ENCODE measurements at regions of chr14 and their contacts with region 1.

Region 1: DNA sequence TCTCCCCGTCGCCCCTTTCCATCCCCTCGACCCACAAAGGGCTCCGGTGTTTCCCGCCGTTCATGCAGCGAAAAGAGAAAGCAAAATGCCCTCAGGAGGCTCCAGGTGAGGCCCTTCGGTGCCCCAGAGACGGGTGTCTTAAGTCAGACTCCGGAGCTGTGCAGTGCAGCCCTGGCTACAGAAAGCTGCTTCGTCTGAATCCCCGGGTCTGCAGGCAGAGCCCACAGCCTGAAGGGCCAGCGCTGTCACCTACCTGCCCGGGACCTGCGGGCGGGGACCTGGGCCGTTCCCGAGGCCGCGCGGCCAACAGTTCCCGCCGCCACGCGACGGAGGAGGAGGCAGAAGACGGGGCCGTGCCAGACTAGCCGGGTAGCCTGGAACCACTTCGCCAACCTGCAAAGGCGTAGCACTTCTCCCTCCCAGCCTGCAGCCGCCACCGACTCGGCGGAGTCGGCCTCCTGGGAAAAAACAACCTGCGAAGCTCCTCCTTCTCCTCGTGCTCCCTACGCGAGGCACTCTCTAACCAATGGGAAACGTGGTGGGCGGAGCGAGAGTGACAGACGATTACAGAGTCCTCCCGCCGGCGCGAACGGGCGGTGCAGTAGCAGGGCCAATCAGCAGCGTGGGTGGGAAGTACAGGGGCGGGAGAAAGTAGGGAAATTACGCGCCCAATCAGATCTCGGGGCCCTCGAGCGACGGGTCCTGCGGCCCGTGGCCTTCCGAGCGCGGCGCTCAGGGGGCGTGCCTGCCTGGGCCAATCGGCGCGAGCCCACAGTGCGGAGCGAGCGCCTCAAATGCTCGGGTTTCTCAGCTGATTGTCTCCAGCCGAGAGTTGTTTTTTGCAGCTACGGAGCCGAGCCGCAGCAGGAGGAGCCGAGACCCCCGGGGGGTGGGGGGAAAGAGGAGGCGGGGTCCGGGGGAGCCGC is at the starts of genes GPR137C and TXNDC16:
- DNase-seq: peak; percentile 100
- H3K4me3 ChIP-seq: peak within 1 kb of the TSS; percentile 29 to 88 (median 60)
- H3K27ac ChIP-seq: peak within 1 kb of the TSS; percentile 64 to 95 (median 91)
- H3K4me1 ChIP-seq: peaks cover 5 to 25% of the 10 kb centered on the region in 2 donors
- H3K27me3 ChIP-seq: no peaks in the 10 kb centered on the region
- CTCF ChIP-seq: no peak
- POLR2A ChIP-seq: peak; percentile 78 to 98
- total RNA-seq, gene GPR137C: 0.09 to 2.8 (median 0.52) TPM
- total RNA-seq, gene TXNDC16: 1.7 to 7.2 (median 5.8) TPM

Region 2: DNA sequence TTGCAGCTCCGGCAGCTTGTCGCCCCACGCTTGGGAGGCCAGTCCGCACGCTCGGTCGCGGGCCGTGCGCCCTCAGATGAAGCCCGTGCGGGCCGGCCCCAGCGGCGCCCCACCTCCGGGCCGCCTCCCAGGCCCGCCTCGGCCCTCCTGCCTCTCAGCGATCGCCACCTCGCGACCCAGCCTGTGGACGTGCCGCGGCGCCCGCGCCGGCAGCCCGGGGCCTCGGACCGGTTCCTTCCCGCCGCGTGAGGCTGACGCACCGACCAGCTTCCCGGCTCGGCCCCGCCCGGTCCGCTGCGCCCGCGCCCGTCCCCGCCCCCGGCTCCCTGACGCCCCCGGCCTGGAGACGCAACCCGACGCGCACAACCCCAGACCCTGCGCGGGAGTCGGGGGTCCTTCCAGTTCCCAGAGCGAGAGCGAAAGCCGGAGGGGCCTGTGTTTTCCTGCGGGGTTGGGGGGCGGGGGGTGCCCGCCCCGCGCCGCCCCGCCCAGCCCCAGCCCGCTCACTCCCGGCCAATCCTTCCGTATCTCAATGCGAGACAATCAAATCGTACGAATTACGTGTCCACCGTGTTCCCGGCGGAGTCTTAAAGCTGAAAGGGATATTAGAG is 143.3 kb after region 1 on chr14 and contains the start of gene ERO1A:
- intact Hi-C with region 1: loop called in 1 of 2 experiments (anchors 10 kb)
- DNase-seq: peak; percentile 85 to 93 (median 90)
- H3K4me3 ChIP-seq: peak within 1 kb of the TSS; percentile 63 to 92 (median 82)
- H3K27ac ChIP-seq: peak within 1 kb of the TSS; percentile 96 to 100 (median 97)
- H3K4me1 ChIP-seq: peaks cover 5 to 33% of the 10 kb centered on the region in 2 donors
- H3K27me3 ChIP-seq: no peaks in the 10 kb centered on the region
- CTCF ChIP-seq: no peak
- POLR2A ChIP-seq: peak; percentile 72 to 86
- total RNA-seq, gene ERO1A: 17.6 to 35.2 (median 25.2) TPM

Region 3: DNA sequence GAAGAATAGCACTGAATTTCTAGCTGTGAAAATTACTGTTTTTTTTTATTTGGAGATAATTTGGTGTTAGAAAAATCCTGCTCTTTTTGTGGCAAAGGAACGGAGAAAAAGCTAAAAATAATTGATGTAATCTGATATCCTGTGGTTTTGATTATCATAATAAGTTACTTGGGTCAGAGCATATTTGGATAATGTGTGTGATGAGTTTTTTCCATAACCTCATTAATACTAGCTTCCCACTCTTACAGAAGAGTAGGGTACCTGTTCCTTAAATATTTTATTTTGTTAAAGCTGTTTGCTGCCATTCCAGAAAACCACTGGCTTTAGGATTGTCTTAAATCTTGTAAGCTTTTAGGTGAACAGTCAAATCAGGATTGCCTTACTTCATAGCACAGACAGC is 159.3 kb after region 1 on chr14:
- intact Hi-C with region 1: loop called in 1 of 2 experiments (anchors 10 kb)
- DNase-seq: no peak
- H3K4me3 ChIP-seq: no peak overlapping the region
- H3K27ac ChIP-seq: peak overlapping the region in 1 of 5 donors; percentile 2
- H3K4me1 ChIP-seq: peaks cover 7 to 38% of the 10 kb centered on the region in 2 donors
- H3K27me3 ChIP-seq: no peaks in the 10 kb centered on the region
- CTCF ChIP-seq: no peak
- POLR2A ChIP-seq: no peak

Measured in adrenal gland (tissue), 19 donors.